CD4-positive, alpha-beta T cell (primary cell): ENCODE measurements at regions of chr16 and their contacts with region 1.

Region 1: DNA sequence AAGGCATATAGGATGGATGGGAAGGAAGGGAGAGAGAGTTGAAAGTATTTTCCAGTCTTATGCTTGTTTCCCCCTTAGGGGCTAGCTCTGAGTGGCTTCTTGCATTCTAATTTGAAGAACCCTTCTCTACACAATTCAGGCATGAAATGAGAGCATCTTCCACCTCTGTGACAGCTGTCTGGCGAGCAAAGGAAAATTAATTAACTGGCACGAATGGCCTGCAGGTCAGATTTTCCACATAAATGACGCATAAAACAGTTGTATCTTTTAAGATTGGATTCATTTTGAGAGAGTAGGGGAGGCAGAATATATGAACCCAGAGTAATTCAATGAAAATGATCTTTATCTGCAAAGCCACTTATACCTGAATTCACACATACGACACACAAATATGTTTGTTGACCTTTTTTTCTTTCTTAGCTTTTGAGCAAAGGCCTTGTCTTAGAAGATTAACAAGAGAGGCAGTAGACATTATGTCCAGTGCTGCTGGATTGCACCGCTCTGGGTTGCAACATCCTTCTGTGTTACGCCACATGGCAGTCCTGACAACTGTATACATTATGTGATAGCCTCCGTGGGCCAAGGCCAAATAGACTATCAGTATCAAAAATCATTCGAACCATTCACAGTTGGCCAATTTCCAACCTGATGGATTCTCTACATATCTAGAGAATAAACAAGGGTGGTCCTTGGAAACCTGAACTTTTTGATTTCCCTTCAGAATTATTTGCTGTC is 173.0 kb upstream of the GOT2 start:
- DNase-seq: no peak
- ATAC-seq: no peak
- H3K4me3 ChIP-seq: no peak overlapping the region
- H3K4me3 Mint-ChIP-seq: no peak overlapping the region
- H3K27ac ChIP-seq: no peak overlapping the region
- H3K27ac Mint-ChIP-seq: no peak overlapping the region
- H3K4me1 ChIP-seq: no peaks in the 10 kb centered on the region
- H3K4me1 Mint-ChIP-seq: no peaks in the 10 kb centered on the region
- H3K27me3 ChIP-seq: no peaks in the 10 kb centered on the region
- H3K27me3 Mint-ChIP-seq: no peaks in the 10 kb centered on the region
- CTCF ChIP-seq: no peak

Region 2: DNA sequence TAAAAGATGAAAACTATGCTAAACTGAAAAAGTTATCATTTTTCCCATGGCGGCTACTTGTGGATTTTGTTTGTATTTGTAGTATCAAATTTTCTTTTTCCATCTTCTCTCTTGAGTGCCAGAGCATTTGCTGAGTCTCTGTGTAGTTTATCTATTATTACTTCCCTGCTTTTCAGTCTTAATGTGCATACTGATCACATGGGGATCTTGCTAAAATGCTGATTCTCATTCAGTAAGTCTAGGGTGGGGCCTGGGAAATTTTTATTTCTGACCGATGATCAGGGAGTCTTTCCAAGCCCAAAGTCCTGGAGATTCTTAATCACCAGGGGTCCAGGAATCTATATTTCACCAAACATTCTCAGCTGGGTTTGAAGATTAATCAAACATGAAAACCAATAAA is 15.9 kb after region 1 on chr16:
- CTCF ChIA-PET with region 1: no interaction called
- POLR2A ChIA-PET with region 1: no interaction called
- intact Hi-C with region 1: loop called (anchors 1 to 2 kb)
- DNase-seq: no peak
- ATAC-seq: no peak
- H3K4me3 ChIP-seq: no peak overlapping the region
- H3K4me3 Mint-ChIP-seq: no peak overlapping the region
- H3K27ac ChIP-seq: no peak overlapping the region
- H3K27ac Mint-ChIP-seq: no peak overlapping the region
- H3K4me1 ChIP-seq: no peaks in the 10 kb centered on the region
- H3K4me1 Mint-ChIP-seq: no peaks in the 10 kb centered on the region
- H3K27me3 ChIP-seq: no peaks in the 10 kb centered on the region
- H3K27me3 Mint-ChIP-seq: no peaks in the 10 kb centered on the region
- CTCF ChIP-seq: no peak

Region 3: DNA sequence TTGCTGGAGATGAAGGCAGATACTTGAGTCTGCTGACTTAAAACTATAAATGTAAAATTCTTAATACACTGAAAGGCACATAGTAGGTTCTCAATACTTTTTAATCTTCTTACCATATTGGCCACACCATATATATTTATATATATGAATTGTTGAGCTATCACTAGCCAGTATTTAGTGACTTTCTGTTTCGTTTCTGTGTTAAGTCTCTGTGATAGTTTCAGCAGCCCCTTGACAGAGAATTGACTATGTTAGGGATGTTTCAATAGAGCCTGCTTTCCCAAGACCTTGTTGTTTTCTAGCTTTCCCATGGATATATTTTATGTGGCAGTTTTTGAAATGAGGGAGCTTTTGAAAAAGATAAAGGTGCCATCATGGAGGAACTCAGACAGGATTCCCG is 33.5 kb after region 1 on chr16:
- CTCF ChIA-PET with region 1: no interaction called
- POLR2A ChIA-PET with region 1: no interaction called
- intact Hi-C with region 1: no loop called
- DNase-seq: no peak
- ATAC-seq: no peak
- H3K4me3 ChIP-seq: no peak overlapping the region
- H3K4me3 Mint-ChIP-seq: no peak overlapping the region
- H3K27ac ChIP-seq: no peak overlapping the region
- H3K27ac Mint-ChIP-seq: no peak overlapping the region
- H3K4me1 ChIP-seq: no peaks in the 10 kb centered on the region
- H3K4me1 Mint-ChIP-seq: no peaks in the 10 kb centered on the region
- H3K27me3 ChIP-seq: no peaks in the 10 kb centered on the region
- H3K27me3 Mint-ChIP-seq: no peaks in the 10 kb centered on the region
- CTCF ChIP-seq: no peak

Region 4: DNA sequence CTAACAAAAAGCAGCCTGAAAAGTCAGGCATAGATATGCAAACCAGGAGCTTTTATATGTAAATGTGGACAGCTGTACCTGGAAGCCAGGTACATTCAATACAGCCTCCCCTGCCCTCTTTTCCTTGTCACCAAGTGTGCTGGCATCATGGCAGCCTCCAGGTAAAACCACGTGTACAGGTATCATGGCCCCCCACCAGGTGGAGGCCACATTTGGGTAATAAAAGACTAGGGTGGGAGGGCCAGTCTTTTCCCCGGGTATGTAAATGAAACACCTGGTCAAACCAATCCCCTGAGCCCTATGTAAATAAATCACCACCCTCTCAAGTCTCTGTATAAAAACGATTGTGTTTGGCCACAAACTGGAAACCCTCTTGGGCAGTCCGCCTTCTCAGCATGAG is 53.3 kb after region 1 on chr16:
- CTCF ChIA-PET with region 1: no interaction called
- POLR2A ChIA-PET with region 1: no interaction called
- intact Hi-C with region 1: no loop called
- DNase-seq: no peak
- ATAC-seq: no peak
- H3K4me3 ChIP-seq: no peak overlapping the region
- H3K4me3 Mint-ChIP-seq: no peak overlapping the region
- H3K27ac ChIP-seq: no peak overlapping the region
- H3K27ac Mint-ChIP-seq: no peak overlapping the region
- H3K4me1 ChIP-seq: no peaks in the 10 kb centered on the region
- H3K4me1 Mint-ChIP-seq: no peaks in the 10 kb centered on the region
- H3K27me3 ChIP-seq: no peaks in the 10 kb centered on the region
- H3K27me3 Mint-ChIP-seq: no peaks in the 10 kb centered on the region
- CTCF ChIP-seq: no peak